Activated T-helper 2 cell treated with anti-CD3 and anti-CD28 coated beads, Interferon-gamma antibody, Interleukin-2, Interleukin-4, amounts not matched to agents 10 μg/mL and 5 μg/mL and 100 μg/mL, durations not matched to agents 14 hours and 24 hours and 36 hours (primary cell): ENCODE measurements at regions of chr6 and their contacts with region 1.

Region 1: DNA sequence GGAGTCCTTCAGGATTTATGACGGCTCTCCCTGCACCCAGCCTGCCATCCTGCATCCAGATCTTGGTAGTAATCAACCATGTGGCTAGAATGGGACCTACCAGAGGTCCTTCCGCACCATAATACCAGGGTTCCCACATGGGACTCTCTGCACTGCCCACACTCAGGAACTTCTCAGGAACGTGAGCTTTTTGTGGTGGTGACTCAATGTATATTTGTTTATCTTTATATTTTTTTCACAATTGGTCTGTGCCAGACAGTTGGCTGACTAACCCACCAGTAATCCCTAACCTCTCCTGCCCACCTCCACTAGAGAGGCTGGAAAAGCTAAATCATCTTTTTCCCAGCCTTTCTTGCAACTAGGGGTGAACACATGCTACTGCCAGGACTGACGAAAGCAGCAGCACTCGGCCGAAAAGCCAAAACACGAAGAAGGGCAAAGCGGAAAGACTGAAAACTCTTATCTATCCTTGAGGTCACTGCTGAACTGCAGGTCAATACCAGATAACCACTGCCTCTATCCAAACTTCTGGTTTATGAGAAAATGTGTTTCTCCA is 113.0 kb downstream of the TRERF1 start:
- DNase-seq: no peak
- H3K4me3 Mint-ChIP-seq: peak overlapping the region; percentile 23
- H3K27ac Mint-ChIP-seq: peak overlapping the region; percentile 88
- H3K4me1 Mint-ChIP-seq: peaks cover 63% of the 10 kb centered on the region
- H3K27me3 Mint-ChIP-seq: no peaks in the 10 kb centered on the region

Region 2: GRCh38 chr6:42315991-42316378 is 22.8 kb before region 1 on chr6:
- intact Hi-C with region 1: loop called (anchors 2 kb)
- DNase-seq: no peak
- H3K4me3 Mint-ChIP-seq: no peak overlapping the region
- H3K27ac Mint-ChIP-seq: peak overlapping the region; percentile 90
- H3K4me1 Mint-ChIP-seq: peaks cover 43% of the 10 kb centered on the region
- H3K27me3 Mint-ChIP-seq: no peaks in the 10 kb centered on the region

Region 3: GRCh38 chr6:42352856-42353564 is 14.3 kb after region 1 on chr6:
- intact Hi-C with region 1: loop called (anchors 1 kb)
- DNase-seq: no peak
- H3K4me3 Mint-ChIP-seq: no peak overlapping the region
- H3K27ac Mint-ChIP-seq: no peak overlapping the region
- H3K4me1 Mint-ChIP-seq: peaks cover 14% of the 10 kb centered on the region
- H3K27me3 Mint-ChIP-seq: no peaks in the 10 kb centered on the region

Region 4: DNA sequence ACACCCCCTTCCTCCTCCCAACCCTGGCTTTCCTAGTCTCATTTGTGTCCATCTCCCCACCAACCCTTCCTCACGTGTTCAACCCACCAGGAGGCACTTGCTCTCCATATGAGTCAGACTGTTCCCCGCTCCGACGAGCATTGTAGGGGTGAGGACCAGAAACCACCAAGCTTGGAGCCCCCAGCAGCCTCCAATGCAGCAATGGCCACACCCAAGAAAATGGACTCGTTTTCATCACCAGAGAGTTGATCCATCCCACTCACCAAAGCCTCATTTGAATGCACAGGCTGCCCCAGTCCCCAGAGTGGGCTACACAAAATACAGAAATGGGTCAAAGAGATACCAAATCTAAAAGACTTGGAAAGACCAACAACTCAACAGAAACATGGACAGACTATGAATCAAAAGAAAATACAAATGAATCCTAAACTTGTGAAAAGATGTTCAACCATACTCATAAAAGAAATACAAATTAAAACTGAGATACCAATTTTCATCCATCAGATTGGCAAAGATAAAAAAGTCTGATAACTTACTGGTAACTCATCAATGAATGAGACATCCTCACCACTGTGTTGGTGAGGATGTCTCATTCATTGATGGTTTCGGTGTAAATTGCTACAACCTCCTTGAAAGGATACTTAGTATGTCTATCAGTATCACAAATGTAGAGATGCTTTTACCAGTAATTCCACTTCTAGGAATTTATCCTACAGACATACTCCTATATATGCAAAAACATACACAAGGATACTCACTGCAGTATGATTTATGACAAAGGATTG is 44.9 kb after region 1 on chr6:
- intact Hi-C with region 1: loop called (anchors 1 kb)
- DNase-seq: no peak
- H3K4me3 Mint-ChIP-seq: peak overlapping the region; percentile 51
- H3K27ac Mint-ChIP-seq: peak overlapping the region; percentile 97
- H3K4me1 Mint-ChIP-seq: peaks cover 75% of the 10 kb centered on the region
- H3K27me3 Mint-ChIP-seq: no peaks in the 10 kb centered on the region

Region 5: GRCh38 chr6:42453031-42453653 is 114.4 kb after region 1 on chr6:
- intact Hi-C with region 1: loop called (anchors 1 kb)
- DNase-seq: peak; percentile 80
- H3K4me3 Mint-ChIP-seq: peak overlapping the region; percentile 98
- H3K27ac Mint-ChIP-seq: no peak overlapping the region
- H3K4me1 Mint-ChIP-seq: peaks cover 34% of the 10 kb centered on the region
- H3K27me3 Mint-ChIP-seq: peaks cover 5% of the 10 kb centered on the region